A673 (cell line): ENCODE measurements at regions of chr2 and their contacts with region 1.

Region 1: GRCh38 chr2:68487773-68488355 is 20.5 kb downstream of the APLF start:
- DNase-seq: peak; percentile 69
- H3K4me3 ChIP-seq: no peak overlapping the region
- H3K27ac ChIP-seq: no peak overlapping the region
- H3K4me1 ChIP-seq: peaks cover 34% of the 10 kb centered on the region
- H3K27me3 ChIP-seq: no peaks in the 10 kb centered on the region
- CTCF ChIP-seq: peak; percentile 68

Region 2: GRCh38 chr2:68594674-68595492 is 107.0 kb after region 1 on chr2:
- CTCF ChIA-PET with region 1: interaction called, 20 read pairs
- POLR2A ChIA-PET with region 1: no interaction called
- intact Hi-C with region 1: no loop called
- DNase-seq: peak; percentile 81
- H3K4me3 ChIP-seq: peak overlapping the region; percentile 7
- H3K27ac ChIP-seq: peak overlapping the region; percentile 77
- H3K4me1 ChIP-seq: peaks cover 23% of the 10 kb centered on the region
- H3K27me3 ChIP-seq: no peaks in the 10 kb centered on the region
- CTCF ChIP-seq: peak; percentile 94

Region 3: GRCh38 chr2:68646302-68646701 is 158.4 kb after region 1 on chr2:
- CTCF ChIA-PET with region 1: interaction called, 21 read pairs
- POLR2A ChIA-PET with region 1: no interaction called
- intact Hi-C with region 1: loop called (anchors 2 kb)
- DNase-seq: peak; percentile 68
- H3K4me3 ChIP-seq: no peak overlapping the region
- H3K27ac ChIP-seq: no peak overlapping the region
- H3K4me1 ChIP-seq: peaks cover 41% of the 10 kb centered on the region
- H3K27me3 ChIP-seq: no peaks in the 10 kb centered on the region
- CTCF ChIP-seq: peak; percentile 70

Region 4: DNA sequence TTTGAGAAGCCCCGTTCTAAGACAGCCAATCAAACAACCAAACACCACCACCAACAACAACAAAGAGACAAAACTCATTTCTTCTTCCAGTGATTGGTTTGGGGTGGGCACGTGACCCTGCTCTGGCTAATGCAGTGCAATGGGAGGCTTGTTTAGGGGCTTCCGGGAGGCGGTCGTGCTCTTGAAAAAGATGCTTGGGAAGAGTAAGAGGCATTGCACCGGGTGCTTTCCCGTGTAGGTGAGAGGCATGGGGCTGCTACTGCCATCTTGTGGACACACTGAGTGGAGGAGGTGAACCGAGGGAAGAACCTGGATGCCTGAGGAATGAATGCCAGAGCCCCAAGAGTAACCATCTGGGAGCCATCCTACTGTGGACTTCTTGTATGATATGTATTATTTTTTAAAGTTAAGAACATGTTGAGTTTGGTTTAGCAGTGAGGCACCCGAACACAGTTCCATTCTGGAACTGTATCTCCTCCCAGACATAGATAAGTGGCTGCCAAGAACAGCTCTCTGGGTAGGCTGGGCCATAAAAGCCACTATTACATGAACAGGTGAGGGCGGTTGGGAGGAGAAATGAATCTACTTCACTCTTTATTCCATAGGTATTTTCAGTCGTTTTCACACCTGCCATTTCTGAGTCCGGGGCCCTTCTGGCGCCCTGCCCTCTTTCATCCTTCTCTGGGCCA is 227.6 kb after region 1 on chr2:
- CTCF ChIA-PET with region 1: interaction called, 10 read pairs
- POLR2A ChIA-PET with region 1: no interaction called
- intact Hi-C with region 1: loop called (anchors 5 kb)
- DNase-seq: peak; percentile 87
- H3K4me3 ChIP-seq: no peak overlapping the region
- H3K27ac ChIP-seq: no peak overlapping the region
- H3K4me1 ChIP-seq: peaks cover 7% of the 10 kb centered on the region
- H3K27me3 ChIP-seq: no peaks in the 10 kb centered on the region
- CTCF ChIP-seq: peak; percentile 85

Region 5: GRCh38 chr2:68925295-68925896 is 437.5 kb after region 1 on chr2:
- CTCF ChIA-PET with region 1: interaction called, 10 read pairs
- POLR2A ChIA-PET with region 1: no interaction called
- intact Hi-C with region 1: loop called (anchors 5 kb)
- DNase-seq: peak; percentile 62
- H3K4me3 ChIP-seq: no peak overlapping the region
- H3K27ac ChIP-seq: no peak overlapping the region
- H3K4me1 ChIP-seq: no peaks in the 10 kb centered on the region
- H3K27me3 ChIP-seq: no peaks in the 10 kb centered on the region
- CTCF ChIP-seq: peak; percentile 80